ENCODE measurements at regions of chr13 and their contacts with region 1.

Region 1: DNA sequence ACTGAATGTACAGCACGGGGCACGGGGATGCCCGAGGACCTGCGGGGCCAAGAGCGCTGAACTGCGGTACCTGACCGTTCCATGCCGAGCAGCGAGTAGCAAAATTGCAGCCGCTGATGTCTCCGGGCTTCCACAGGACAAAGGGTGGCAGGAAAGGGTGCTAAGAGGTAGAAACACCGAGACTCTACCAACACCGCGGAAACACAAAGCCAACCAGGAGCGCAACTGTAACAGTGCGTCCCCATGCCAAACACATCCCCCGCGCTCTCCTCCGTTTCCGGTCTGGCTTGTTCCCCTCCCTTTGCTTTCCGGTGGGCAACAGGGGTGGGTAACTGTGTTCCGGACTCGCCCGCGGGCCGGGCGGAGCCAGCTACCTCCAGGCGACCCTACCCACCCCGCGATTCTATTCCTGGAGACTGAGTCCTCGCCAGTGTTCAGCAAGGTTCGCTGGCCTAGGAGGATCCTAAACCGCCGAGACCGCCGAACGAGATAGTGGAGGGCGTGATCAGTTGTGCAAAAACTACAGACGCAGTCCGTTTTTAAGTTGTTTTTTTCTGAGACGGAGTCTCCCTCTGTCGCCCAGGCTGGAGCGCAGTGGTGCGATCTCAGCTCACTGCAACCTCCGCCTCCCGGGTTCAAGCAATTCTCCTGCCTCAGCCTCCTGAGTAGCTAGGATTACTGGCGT is 34.9 kb upstream of the NEK3 start:
- DNase-seq: peak; percentile 60
- ATAC-seq: peak; percentile 83
- H3K4me3 ChIP-seq: peak overlapping the region; percentile 94
- H3K27ac ChIP-seq: peak overlapping the region; percentile 54
- H3K4me1 ChIP-seq: no peaks in the 10 kb centered on the region
- H3K27me3 ChIP-seq: no peaks in the 10 kb centered on the region
- CTCF ChIP-seq: no peak
- EP300 ChIP-seq: no peak
- POLR2A ChIP-seq: peak; percentile 92
- RAD21 ChIP-seq: no peak

Region 2: DNA sequence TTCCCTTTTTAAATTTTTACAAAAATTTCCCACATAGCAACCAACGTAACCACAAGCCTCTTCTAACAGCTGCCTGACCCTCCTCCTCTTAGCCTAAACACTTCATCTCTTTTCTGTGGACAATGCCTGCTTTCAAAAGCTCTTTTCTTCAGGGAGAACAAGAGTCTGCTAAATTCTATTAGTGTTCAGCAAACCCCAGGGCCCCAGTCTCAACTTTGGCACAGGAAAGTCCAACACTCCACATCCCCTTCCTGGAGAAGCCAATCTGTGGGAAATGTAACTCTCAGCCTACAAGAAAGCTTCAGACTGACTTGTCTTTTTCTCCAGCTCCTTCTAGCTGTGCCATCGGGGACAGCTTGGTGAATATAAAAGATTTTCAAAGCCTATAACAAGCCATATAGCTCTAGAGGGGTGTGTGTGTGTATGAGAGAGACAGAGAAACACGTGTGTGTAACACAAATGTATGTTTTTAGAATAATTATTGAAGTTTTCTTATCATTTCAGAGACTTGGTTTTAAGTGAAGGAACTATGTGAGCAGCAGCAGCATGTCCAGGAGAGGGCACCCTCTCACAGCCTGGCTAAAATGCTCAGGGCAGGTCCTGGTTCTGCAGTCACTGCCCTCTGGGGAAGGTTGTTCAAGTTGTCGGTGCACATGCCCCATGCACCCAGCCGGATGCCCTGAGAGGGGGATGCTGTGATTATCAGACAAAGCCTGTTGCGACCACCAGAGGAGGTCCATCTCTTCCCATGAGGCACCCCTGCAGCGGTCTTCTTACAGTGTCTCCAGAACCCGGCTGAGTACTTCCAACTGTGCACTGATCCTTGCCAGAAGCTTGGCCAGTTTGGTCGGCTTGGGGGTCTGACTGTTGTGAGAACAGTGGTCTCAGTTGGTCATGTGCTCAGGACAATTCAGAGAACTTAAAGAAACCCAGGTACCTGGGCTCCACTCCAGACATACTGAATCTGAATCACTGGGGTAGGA is 298.1 kb before region 1 on chr13:
- CTCF ChIA-PET with region 1: no interaction called
- POLR2A ChIA-PET with region 1: no interaction called
- RAD21 ChIA-PET with region 1: no interaction called
- SMC1A ChIA-PET with region 1: no interaction called
- in situ Hi-C with region 1: no loop called
- intact Hi-C with region 1: no loop called
- DNase-seq: no peak
- ATAC-seq: peak; percentile 99
- H3K4me3 ChIP-seq: no peak overlapping the region
- H3K27ac ChIP-seq: no peak overlapping the region
- H3K4me1 ChIP-seq: no peaks in the 10 kb centered on the region
- H3K27me3 ChIP-seq: peaks cover 1 to 4% of the 10 kb centered on the region in 2 experiments; a peak in 2 of 4 replicates
- CTCF ChIP-seq: peak; percentile 78 to 84 (median 83)
- EP300 ChIP-seq: no peak
- POLR2A ChIP-seq: no peak
- RAD21 ChIP-seq: peak; percentile 81

Region 3: GRCh38 chr13:51911860-51912510 is 282.3 kb before region 1 on chr13:
- CTCF ChIA-PET with region 1: no interaction called
- POLR2A ChIA-PET with region 1: no interaction called
- RAD21 ChIA-PET with region 1: no interaction called
- SMC1A ChIA-PET with region 1: no interaction called
- in situ Hi-C with region 1: no loop called
- intact Hi-C with region 1: no loop called
- DNase-seq: no peak
- ATAC-seq: peak; percentile 26
- H3K4me3 ChIP-seq: no peak overlapping the region
- H3K27ac ChIP-seq: no peak overlapping the region
- H3K4me1 ChIP-seq: peaks cover 6% of the 10 kb centered on the region; the same call in 1 of the 2 replicates
- H3K27me3 ChIP-seq: peaks cover 0 to 4% of the 10 kb centered on the region in 2 experiments; a peak in 2 of 4 replicates
- CTCF ChIP-seq: no peak; a peak in 1 of 6 replicates
- EP300 ChIP-seq: no peak
- POLR2A ChIP-seq: no peak
- RAD21 ChIP-seq: no peak

Region 4: GRCh38 chr13:52011632-52012511 is 182.5 kb before region 1 on chr13 and contains the start of gene ALG11:
- CTCF ChIA-PET with region 1: no interaction called
- POLR2A ChIA-PET with region 1: no interaction called
- RAD21 ChIA-PET with region 1: no interaction called
- SMC1A ChIA-PET with region 1: interaction called, 6 read pairs
- in situ Hi-C with region 1: no loop called
- intact Hi-C with region 1: loop called (anchors 5 kb)
- DNase-seq: peak; percentile 94
- ATAC-seq: peak; percentile 100
- H3K4me3 ChIP-seq: peak within 1 kb of the TSS; percentile 95
- H3K27ac ChIP-seq: peak within 1 kb of the TSS; percentile 49
- H3K4me1 ChIP-seq: no peaks in the 10 kb centered on the region; the same call in 1 of the 2 replicates
- H3K27me3 ChIP-seq: peaks cover 2 to 13% of the 10 kb centered on the region in 2 experiments; a peak in 2 of 4 replicates
- CTCF ChIP-seq: no peak
- EP300 ChIP-seq: no peak
- POLR2A ChIP-seq: peak; percentile 92
- RAD21 ChIP-seq: no peak
- polyA plus RNA-seq, gene ALG11: 10.4 to 16.0 TPM

Region 5: DNA sequence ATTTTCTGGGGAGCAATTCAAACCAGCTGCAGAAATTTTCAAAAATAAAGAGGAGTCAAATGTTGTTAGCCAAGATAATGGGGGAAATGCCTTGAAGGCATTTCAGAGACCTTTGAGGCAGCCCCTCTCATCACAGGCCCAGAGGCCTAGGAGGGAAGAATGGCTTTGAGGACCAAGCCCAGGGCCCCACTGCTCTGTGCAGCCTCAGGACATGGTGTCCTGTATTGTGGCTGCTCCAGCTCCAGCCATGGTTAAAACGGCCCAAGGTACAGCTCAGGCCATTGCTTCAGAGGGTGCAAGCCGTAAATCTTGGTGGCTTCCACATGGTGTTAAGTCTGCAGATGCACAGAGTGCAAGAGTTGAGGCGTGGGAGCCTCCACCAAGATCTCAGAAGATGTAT is 97.6 kb before region 1 on chr13:
- CTCF ChIA-PET with region 1: no interaction called
- POLR2A ChIA-PET with region 1: no interaction called
- RAD21 ChIA-PET with region 1: no interaction called
- SMC1A ChIA-PET with region 1: no interaction called
- in situ Hi-C with region 1: no loop called
- intact Hi-C with region 1: no loop called
- DNase-seq: no peak
- ATAC-seq: no peak
- H3K4me3 ChIP-seq: no peak overlapping the region
- H3K27ac ChIP-seq: no peak overlapping the region
- H3K4me1 ChIP-seq: no peaks in the 10 kb centered on the region
- H3K27me3 ChIP-seq: no peaks in the 10 kb centered on the region
- CTCF ChIP-seq: no peak
- EP300 ChIP-seq: no peak
- POLR2A ChIP-seq: no peak
- RAD21 ChIP-seq: no peak

Region 6: DNA sequence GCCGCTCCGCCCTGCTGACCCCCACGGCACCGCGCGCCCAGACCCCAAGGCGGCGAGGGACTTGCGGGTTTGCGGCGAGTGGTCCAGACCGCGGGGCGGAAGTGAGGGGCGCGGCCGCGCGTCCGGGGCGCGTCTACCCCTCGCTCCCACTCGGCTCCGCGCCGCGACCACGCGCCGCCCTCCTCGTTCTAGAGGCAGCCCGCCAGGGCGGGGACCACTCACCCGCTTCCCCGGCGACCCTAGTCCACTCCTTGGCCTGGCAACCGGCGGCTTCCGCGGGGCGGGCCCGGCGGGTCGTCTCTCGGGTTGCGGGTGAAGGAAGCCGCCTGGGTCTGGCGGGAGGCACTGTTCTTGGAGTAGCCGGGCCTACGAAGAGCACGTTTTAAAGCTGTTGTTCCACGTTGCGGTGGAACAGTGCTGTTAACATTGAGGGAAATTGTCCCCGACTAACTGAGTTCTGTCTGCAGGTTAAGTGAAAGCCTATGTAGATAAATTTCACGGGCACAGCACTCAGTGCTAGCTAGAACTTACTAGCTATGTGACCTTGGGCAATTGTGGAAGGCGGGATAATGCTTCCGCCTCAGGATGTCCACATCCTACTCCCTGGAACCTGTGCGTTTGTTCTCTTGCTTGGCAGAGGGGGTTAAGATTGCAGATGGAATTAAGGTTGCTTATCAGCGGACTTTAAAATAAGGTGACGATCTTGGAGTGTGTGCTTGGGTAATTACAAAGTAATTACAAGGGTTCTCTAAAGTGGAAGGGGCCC is 34.8 kb before region 1 on chr13 and contains the start of gene NEK3:
- CTCF ChIA-PET with region 1: interaction called, 4 read pairs
- POLR2A ChIA-PET with region 1: no interaction called
- RAD21 ChIA-PET with region 1: no interaction called
- SMC1A ChIA-PET with region 1: interaction called, 3 read pairs
- in situ Hi-C with region 1: no loop called
- intact Hi-C with region 1: loop called (anchors 2 kb)
- DNase-seq: no peak
- ATAC-seq: peak; percentile 95
- H3K4me3 ChIP-seq: peak within 1 kb of the TSS; percentile 79
- H3K27ac ChIP-seq: 0 out of 2 replicates have a peak within 1 kb of the TSS, but pooled peaks have one; percentile 13
- H3K4me1 ChIP-seq: peaks cover 5% of the 10 kb centered on the region; the same call in 1 of the 2 replicates
- H3K27me3 ChIP-seq: no peaks in the 10 kb centered on the region
- CTCF ChIP-seq: no peak
- EP300 ChIP-seq: no peak
- POLR2A ChIP-seq: peak; percentile 47
- RAD21 ChIP-seq: no peak
- polyA plus RNA-seq, gene NEK3: 5.7 to 8.6 TPM

Region 7: DNA sequence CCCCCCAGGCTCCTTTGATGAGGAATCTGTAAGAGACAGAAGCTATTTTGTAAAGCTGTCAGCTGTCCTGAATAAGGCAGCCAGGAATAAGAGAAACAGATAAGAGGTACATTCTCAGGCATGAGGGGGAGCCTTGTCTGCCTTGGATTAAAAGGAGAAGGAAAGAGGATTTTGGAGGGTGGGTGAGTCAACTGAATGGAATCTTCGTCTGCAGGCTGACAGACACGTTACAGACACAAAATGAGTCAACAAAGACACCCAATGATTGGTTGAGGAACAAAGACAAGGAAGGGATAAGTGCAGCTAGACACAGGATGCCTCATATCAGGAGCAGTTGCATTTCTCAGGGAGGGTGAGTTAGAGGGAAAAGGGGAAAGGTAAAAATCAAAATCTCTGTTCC is 996.8 kb after region 1 on chr13:
- CTCF ChIA-PET with region 1: no interaction called
- POLR2A ChIA-PET with region 1: no interaction called
- RAD21 ChIA-PET with region 1: no interaction called
- SMC1A ChIA-PET with region 1: no interaction called
- in situ Hi-C with region 1: no loop called
- intact Hi-C with region 1: no loop called
- DNase-seq: no peak
- ATAC-seq: no peak
- H3K4me3 ChIP-seq: no peak overlapping the region
- H3K27ac ChIP-seq: no peak overlapping the region
- H3K4me1 ChIP-seq: no peaks in the 10 kb centered on the region
- H3K27me3 ChIP-seq: no peaks in the 10 kb centered on the region
- CTCF ChIP-seq: no peak
- EP300 ChIP-seq: no peak
- POLR2A ChIP-seq: no peak
- RAD21 ChIP-seq: no peak